Panc1 (cell line): ENCODE measurements at regions of chr2 and their contacts with region 1.

Region 1: DNA sequence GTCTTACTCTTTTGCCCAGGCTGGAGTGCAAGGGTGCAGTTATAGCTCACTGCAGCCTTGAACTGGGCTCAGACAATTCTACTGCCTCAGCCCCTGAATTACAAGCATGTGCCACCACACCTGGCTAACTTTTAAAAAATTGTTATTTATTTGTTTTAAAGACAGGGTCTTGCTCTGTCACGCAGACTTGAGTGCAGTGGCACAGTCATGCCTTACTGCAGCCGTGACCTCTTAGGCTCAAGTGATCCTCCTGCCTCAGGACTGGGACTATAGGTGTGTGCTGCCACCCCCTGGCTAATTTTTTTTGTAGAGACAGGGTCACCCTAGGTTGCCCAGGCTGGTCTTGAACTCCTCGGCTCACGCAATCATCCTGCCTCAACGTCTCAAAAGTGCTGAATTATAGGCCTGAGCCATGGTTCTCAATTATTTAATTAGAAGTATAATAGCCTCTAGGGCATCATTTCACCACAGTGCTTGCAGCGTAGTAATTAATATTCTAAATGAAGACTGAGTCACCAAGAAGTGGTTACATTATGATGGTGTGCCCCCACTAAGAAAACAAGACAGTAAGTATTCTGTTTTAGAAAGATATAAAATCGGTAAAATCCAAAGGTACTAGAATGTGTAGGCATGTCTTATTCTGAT is 69.6 kb downstream of the EML4 start:
- DNase-seq: peak; percentile 24
- ATAC-seq: peak; percentile 98
- H3K4me3 ChIP-seq: no peak overlapping the region
- H3K27ac ChIP-seq: peak overlapping the region; percentile 8; the same call in 1 of the 2 replicates
- H3K4me1 ChIP-seq: peaks cover 34% of the 10 kb centered on the region
- H3K27me3 ChIP-seq: no peaks in the 10 kb centered on the region
- CTCF ChIP-seq: peak; percentile 82

Region 2: DNA sequence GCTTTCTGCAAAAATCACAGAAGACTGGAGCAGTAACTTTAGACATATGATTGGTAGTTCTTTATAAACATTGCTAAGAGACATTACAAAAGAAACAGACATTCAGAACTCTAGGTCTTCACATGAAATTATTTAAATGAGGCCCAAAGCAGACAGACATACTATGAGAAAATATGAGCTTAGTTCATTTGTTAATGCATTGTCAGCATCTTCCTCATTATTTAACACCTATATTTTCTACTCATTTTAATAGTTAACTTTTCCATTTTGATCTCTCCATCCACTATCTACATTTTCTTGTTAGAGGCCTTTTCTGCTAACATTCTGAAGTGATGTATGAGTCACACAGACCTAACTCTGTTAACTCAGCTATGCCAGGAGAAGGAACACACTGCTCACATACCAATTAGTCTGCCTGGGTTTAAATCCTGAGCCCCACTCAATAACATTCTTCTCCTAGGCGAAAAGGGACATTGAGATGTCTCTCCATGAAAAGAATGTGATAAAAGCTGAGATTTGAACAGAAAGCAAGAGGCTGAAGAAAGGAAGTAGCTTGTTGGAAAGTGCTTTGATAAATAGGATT is 591.2 kb before region 1 on chr2:
- CTCF ChIA-PET with region 1: no interaction called
- POLR2A ChIA-PET with region 1: no interaction called
- in situ Hi-C with region 1: no loop called
- intact Hi-C with region 1: no loop called
- DNase-seq: no peak
- ATAC-seq: no peak
- H3K4me3 ChIP-seq: no peak overlapping the region
- H3K27ac ChIP-seq: no peak overlapping the region
- H3K4me1 ChIP-seq: no peaks in the 10 kb centered on the region
- H3K27me3 ChIP-seq: no peaks in the 10 kb centered on the region
- CTCF ChIP-seq: no peak

Region 3: DNA sequence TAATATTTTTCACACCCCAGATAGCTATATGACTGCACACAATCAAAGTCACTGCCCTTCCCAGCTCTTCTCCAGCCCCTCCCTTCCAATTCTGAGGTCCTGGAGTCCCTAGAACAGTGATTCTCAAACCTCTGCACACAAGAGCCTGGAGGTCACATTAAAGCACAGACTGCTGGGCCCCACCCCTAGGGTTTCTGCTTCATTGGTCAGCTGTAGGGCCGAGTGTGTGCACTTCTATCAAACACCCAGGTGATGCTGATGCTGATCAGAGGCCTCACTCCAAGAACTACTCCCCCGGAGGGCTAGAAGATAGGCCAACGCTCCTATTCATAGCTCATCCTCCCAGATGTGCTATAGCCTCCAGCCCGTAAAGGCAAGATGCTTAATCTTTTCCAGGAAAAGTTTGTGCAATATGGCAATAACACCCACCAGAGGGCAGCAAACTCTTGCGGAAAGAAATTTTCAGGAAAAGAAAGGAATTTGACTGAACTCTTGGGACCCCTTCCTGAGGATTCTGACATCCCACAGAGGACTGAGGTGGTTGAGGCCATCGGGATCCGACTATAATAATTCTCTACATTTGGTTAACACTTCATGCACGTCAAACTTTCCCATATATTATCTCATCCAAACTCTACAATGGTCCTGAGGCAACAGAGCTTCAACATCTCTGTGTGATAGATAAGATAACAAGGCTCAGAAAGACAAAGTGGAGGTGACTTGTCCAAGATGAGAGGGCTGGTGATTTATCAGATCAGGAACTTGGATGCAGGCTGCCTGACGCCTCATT is 385.1 kb before region 1 on chr2:
- CTCF ChIA-PET with region 1: interaction called, 7 read pairs
- POLR2A ChIA-PET with region 1: no interaction called
- in situ Hi-C with region 1: no loop called
- intact Hi-C with region 1: loop called (anchors 10 kb)
- DNase-seq: no peak
- ATAC-seq: peak; percentile 73
- H3K4me3 ChIP-seq: no peak overlapping the region
- H3K27ac ChIP-seq: no peak overlapping the region
- H3K4me1 ChIP-seq: no peaks in the 10 kb centered on the region
- H3K27me3 ChIP-seq: no peaks in the 10 kb centered on the region; the same call in 1 of the 2 replicates
- CTCF ChIP-seq: peak; percentile 84

Region 4: GRCh38 chr2:42095923-42096408 is 142.8 kb before region 1 on chr2:
- CTCF ChIA-PET with region 1: interaction called, 16 read pairs
- POLR2A ChIA-PET with region 1: no interaction called
- in situ Hi-C with region 1: no loop called
- intact Hi-C with region 1: loop called (anchors 1 kb)
- DNase-seq: peak; percentile 41
- ATAC-seq: peak; percentile 75
- H3K4me3 ChIP-seq: no peak overlapping the region
- H3K27ac ChIP-seq: peak overlapping the region; percentile 75
- H3K4me1 ChIP-seq: peaks cover 41% of the 10 kb centered on the region
- H3K27me3 ChIP-seq: no peaks in the 10 kb centered on the region
- CTCF ChIP-seq: peak; percentile 79

Region 5: DNA sequence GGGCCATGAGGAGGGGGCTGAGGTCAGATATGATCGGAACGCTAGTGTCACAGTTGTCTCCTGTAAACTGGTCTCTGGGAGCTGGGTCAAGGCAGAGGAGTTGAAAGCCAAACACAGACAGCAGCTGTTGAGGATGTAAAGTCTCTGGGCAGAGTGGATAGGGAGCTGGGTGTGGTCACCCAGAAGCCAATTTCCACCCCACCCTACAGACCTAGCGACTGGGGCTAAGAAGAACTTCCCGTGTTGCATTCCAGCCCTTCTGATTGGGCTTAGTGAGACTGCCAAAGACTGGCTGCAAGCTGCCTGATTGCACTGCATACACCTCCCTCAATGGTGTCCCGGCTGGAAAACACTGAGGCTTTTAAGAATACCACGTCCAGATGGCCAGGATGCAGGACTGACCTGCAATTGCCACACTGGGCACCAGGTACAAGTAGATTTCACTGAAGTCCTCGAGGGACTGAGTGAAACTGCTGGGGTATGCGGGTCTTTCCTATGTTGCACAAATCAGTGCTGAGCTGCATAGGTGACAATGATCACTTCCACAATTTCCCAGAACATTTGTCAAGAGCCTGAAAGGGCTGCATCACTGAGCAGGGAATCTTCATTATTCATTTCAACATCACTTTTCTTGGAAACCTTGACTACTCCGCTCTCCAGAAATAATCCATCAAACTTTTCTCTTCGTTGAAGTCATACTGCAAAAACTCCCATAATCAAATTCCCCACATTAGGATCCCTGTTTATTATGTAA is 112.7 kb before region 1 on chr2:
- CTCF ChIA-PET with region 1: interaction called, 10 read pairs
- POLR2A ChIA-PET with region 1: no interaction called
- in situ Hi-C with region 1: no loop called
- intact Hi-C with region 1: no loop called
- DNase-seq: no peak
- ATAC-seq: peak; percentile 69
- H3K4me3 ChIP-seq: peak overlapping the region in 1 of 2 experiments; percentile 14; a peak in 1 of 4 replicates
- H3K27ac ChIP-seq: peak overlapping the region; percentile 99
- H3K4me1 ChIP-seq: peaks cover 63% of the 10 kb centered on the region
- H3K27me3 ChIP-seq: no peaks in the 10 kb centered on the region
- CTCF ChIP-seq: no peak

Region 6: GRCh38 chr2:42210203-42210602 is 28.6 kb before region 1 on chr2:
- CTCF ChIA-PET with region 1: no interaction called
- POLR2A ChIA-PET with region 1: interaction called, 10 read pairs
- in situ Hi-C with region 1: no loop called
- intact Hi-C with region 1: no loop called
- DNase-seq: no peak
- ATAC-seq: no peak
- H3K4me3 ChIP-seq: no peak overlapping the region
- H3K27ac ChIP-seq: no peak overlapping the region
- H3K4me1 ChIP-seq: peaks cover 10% of the 10 kb centered on the region; the same call in 1 of the 2 replicates
- H3K27me3 ChIP-seq: no peaks in the 10 kb centered on the region
- CTCF ChIP-seq: no peak